Endothelial cell of umbilical vein (primary cell): ENCODE measurements at regions of chr9 and their contacts with region 1.

Region 1: DNA sequence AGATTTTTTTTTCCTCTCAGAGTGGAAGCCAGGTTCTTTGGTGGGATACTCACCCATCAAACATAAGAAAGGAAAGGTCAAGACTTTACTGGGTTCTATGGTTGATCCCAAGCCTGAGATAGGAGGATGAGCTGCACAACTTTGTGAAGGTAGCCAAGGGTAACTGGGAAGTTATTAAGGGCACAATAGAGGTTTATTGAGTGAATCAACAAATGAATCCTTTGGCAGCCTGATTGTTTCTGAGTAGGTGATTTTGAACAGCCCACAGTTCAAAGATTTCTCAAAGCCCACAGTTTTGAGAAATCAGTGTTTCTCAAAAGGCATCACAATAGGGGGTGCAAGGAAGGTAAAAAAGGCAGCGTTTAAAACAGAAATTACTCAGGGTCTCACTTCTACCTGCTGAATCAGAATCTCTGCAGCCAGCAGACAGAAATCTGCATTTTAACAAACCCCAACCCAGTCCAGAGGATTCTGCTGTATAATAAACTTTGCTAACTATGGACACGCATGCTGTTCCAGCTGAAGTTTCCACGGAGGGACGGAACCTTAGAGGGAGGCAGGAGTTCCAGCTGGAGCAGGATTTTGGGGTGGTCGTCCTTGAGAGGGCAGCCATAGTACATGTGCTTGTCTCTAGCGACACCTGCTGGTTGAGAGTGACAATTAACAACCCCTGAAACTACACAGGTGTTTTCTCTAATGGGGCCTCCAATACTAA is 32.7 kb upstream of the FSD1L start:
- DNase-seq: peak; percentile 51
- H3K4me3 ChIP-seq: no peak overlapping the region
- H3K27ac ChIP-seq: no peak overlapping the region
- H3K4me1 ChIP-seq: no peaks in the 10 kb centered on the region
- H3K27me3 ChIP-seq: no peaks in the 10 kb centered on the region
- CTCF ChIP-seq: peak; percentile 70 to 72
- POLR2A ChIP-seq: no peak

Region 2: DNA sequence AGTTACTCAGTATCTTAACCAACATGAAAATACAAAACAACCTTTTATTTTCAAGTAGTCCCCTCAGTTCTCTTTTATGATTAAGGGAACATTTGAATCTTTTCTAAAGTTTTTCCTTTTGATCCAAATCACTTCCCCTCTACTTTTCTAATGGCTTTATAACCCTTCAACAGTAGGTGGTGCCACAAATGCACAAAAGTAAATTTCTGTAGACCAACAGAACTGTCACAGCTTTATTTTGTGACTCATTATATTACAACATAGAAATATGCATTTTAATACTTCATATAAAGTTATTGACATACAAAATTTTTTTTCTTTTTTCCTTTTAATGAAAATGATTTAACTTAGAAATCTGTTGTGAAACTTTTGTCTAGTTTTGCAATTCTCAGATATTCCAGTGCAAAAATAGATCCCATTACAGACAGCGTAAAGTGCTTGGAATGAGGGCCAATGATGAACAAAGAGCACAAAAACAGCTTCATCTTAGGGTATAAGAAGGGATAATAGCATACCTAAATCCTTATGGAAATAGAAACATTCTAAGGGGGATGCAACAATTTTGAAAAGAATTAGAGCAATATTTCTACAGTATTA is 634.2 kb before region 1 on chr9:
- CTCF ChIA-PET with region 1: interaction called, 8 read pairs
- POLR2A ChIA-PET with region 1: no interaction called
- dilution Hi-C with region 1: no loop called
- intact Hi-C with region 1: loop called (anchors 1 kb)
- DNase-seq: peak; percentile 29
- H3K4me3 ChIP-seq: no peak overlapping the region
- H3K27ac ChIP-seq: no peak overlapping the region
- H3K4me1 ChIP-seq: no peaks in the 10 kb centered on the region
- H3K27me3 ChIP-seq: peaks cover 0 to 5% of the 10 kb centered on the region in 2 experiments
- CTCF ChIP-seq: peak; percentile 16 to 23
- POLR2A ChIP-seq: no peak

Region 3: DNA sequence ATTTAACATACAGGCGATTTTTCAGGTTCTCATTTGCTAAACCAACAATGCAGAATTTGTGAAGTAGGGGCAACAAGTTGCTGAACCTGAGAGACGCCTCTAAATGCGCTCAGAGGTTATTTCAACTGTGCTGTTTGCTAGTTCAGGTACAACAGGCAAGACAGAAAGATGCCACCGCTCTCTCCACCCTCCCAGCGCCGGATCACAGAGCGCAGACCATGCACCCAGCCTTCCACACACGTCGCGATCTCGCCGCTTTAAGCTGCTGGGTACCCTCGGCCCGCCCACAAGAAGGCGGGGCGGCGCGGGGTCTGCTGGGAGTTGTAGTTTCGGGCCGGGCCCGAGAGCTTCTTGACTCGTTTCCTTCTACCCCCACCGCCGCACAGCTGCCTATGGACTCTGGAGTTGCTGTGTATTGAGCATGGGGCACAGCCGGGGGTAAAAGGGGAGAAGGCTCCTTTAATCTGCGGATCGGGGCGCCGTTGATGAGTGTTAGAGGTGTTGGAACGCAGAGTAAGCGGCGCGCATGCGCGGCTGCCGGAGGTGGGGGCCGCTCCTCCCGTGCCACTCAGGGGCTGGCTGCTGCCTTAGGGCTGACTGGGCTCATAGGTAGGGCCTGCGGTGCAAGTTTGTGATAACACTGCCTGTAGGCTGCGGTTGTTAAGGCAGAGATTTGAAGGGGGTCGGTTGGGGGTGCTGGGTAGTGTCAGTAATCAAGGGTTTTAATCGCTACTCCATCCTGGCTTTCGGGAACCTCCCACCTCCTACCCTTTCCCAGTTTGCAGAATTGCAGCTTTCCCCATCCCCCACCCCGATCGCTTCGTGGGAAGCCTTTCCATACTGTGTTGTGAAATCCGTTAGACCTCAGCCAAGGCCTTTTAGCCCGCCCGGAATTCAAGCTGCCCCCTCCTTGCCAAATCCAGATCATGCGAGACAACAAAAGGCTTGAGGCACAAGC is 446.8 kb before region 1 on chr9:
- CTCF ChIA-PET with region 1: interaction called, 4 read pairs
- POLR2A ChIA-PET with region 1: no interaction called
- dilution Hi-C with region 1: no loop called
- intact Hi-C with region 1: loop called (anchors 1 kb)
- DNase-seq: peak; percentile 86
- H3K4me3 ChIP-seq: peak overlapping the region; percentile 63 to 93 (median 87)
- H3K27ac ChIP-seq: peak overlapping the region; percentile 58
- H3K4me1 ChIP-seq: peaks cover 6% of the 10 kb centered on the region
- H3K27me3 ChIP-seq: peaks cover 3% of the 10 kb centered on the region in 2 experiments
- CTCF ChIP-seq: no peak
- POLR2A ChIP-seq: no peak

Region 4: DNA sequence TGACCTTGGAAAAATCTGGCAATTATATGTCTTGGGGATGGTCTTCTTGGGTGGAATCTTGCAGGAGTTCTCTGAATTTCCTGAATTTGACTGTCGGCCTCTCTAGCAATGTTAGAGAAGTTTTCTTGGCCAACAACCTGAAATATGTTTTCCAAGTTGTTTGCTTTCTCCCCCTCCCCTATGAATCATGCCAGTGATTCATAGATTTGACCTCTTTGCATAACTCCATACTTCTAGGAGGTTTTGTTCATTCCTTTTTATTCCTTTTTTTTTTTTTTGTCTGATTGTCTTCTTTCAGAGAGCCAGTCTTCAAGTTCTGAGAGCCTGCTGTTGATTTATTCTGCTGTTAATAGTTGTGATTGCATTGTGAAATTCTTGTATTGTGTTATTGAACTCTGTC is 227.3 kb before region 1 on chr9:
- CTCF ChIA-PET with region 1: no interaction called
- POLR2A ChIA-PET with region 1: interaction called, 3 read pairs
- dilution Hi-C with region 1: no loop called
- intact Hi-C with region 1: loop called (anchors 1 kb)
- DNase-seq: peak; percentile 81
- H3K4me3 ChIP-seq: no peak overlapping the region
- H3K27ac ChIP-seq: no peak overlapping the region
- H3K4me1 ChIP-seq: peaks cover 2% of the 10 kb centered on the region
- H3K27me3 ChIP-seq: no peaks in the 10 kb centered on the region
- CTCF ChIP-seq: no peak
- POLR2A ChIP-seq: no peak